OCI-LY7 (cell line): ENCODE measurements at regions of chr6 and their contacts with region 1.

Region 1: DNA sequence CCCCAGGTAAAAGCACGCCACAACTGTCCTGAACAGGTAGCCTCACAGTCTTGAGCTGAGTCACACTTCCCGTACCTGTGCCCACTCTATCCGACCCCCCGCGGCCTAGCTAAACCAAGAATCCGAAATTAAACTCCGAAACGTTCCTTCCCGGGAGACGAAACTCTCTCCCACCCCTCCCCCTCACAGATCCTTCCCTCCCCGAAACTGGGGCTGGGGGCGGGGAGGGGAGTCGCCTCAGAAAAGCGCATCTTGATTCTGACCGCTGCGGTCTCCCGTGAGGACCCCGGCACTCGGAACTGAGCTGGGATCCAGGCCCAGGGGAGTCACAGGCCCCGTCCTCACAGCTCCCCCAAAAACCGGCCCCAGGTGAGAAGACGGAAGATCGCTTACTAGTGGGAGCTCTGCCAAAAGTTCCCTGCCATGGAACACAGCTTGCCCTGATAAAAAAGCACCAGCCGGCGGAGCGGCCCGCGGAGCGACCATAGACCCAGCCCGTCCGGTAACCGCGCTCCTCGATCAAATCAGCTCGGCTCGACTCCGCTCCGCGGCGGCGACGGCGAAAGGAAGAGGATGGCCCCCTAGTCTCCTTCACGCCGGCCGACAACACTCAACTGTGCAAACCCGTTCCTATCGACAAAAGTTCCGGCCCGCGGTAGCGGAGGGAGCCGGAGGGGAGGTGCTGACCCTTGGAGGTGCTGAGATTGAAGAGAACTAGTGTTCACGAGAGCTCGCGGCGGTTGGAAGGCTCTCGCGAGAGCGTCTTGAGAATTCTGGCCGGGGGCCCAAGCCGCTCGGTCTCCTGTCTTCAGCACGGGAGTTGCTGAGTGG is at the start of gene CCNC:
- DNase-seq: peak; percentile 97
- H3K4me3 ChIP-seq: peak within 1 kb of the TSS; percentile 89
- H3K27ac ChIP-seq: peak within 1 kb of the TSS; percentile 73
- H3K4me1 ChIP-seq: peaks cover 12% of the 10 kb centered on the region
- CTCF ChIP-seq: no peak
- total RNA-seq, gene CCNC: 53.4 and 58.4 TPM in 2 replicates

Region 2: DNA sequence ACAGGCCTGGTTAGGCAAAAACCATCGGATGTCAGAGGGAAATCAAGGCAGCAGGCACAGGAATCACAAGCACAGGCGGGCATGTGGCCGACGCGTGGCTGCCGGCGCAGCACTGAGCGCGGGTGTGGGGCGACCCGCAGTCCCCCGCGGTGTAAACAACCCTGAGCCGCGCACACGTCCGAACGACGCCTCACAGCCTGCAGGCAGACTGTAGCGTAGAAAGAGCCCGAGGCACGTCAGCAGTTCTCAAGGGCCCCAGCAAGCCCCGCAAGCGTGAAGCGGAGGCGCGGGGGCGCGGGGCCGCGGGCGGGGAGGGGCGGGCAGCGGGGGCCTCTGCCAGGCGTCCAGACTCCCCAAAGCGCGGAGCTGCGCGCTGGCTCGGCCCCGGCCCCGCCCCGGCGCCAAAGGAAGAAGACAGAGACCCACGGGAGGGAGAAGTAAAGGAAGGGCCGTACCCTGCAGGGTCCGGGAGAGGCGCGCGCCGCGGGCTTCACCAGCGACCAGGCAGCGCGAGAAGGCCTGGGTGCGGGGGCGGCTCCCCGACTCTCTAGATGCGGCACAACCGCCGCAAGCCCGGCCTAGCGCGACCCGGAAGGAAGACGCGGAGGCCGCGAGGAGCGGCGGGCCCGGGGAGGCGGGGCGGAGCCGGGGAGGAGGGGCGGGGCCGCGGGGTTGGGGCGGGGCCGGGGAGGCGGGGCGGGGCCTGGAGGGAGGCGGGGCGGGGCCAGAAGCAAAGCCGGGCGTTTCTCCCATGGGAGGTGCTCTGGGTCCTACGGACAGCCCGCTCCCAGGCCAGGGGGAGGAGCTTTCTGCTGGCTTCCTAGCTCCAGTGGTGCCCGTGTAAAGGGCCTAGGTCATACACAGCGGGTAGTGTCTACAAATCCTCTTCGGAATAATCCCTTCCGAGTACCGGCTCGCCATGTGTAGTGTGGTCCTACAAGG is 620.7 kb before region 1 on chr6 and contains the start of gene FBXL4:
- CTCF ChIA-PET with region 1: no interaction called
- POLR2A ChIA-PET with region 1: no interaction called
- intact Hi-C with region 1: loop called (anchors 5 kb)
- DNase-seq: peak; percentile 83
- H3K4me3 ChIP-seq: peak within 1 kb of the TSS; percentile 83
- H3K27ac ChIP-seq: peak within 1 kb of the TSS; percentile 73
- H3K4me1 ChIP-seq: peaks cover 15% of the 10 kb centered on the region
- CTCF ChIP-seq: no peak
- total RNA-seq, gene FBXL4: 8.0 and 14.5 TPM in 2 replicates

Region 3: GRCh38 chr6:99047447-99047846 is 520.9 kb before region 1 on chr6:
- CTCF ChIA-PET with region 1: no interaction called
- POLR2A ChIA-PET with region 1: no interaction called
- intact Hi-C with region 1: no loop called
- DNase-seq: no peak
- H3K4me3 ChIP-seq: no peak overlapping the region
- H3K27ac ChIP-seq: no peak overlapping the region
- H3K4me1 ChIP-seq: no peaks in the 10 kb centered on the region
- CTCF ChIP-seq: no peak

Region 4: GRCh38 chr6:99330159-99330558 is 238.2 kb before region 1 on chr6:
- CTCF ChIA-PET with region 1: no interaction called
- POLR2A ChIA-PET with region 1: no interaction called
- intact Hi-C with region 1: no loop called
- DNase-seq: peak; percentile 72
- H3K4me3 ChIP-seq: no peak overlapping the region
- H3K27ac ChIP-seq: no peak overlapping the region
- H3K4me1 ChIP-seq: no peaks in the 10 kb centered on the region
- CTCF ChIP-seq: peak; percentile 89

Region 5: DNA sequence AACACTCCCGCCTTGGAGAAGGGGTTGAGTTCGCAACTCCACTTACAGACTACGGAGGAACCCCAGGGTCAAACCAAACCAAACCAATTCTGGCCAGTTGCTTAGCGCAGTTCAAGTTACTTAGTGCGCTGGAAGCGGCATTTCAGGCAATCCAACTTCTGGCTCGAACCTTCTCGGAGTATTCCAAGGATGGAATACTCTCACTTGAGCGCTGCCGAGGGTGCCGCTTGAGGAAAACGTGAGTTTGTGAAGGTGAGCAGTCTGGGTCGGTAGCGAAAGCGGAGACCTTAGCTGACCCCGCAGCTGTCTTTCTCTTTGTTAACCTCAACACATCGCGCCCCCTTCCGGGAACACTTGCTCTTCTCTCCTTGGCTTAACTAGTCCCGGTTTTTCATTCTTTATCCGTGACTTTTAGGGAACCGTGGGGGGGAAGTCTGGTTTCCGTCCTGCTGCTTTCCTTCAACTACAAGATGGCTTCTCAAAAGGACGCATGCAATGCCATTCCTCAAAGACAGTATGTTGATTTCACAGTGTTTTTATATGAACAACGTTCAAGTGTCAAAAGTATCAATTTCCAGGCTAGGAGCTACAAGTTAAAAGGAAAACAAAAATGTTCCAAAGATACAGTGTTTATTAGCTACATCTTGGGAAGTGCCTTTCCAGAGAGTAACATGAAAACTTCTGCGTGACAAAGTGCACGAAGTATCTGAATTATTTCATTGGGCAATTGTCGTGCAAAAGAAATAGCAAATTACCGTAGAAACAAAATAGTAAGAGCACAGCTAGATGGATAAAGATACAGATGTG is 142.5 kb before region 1 on chr6:
- CTCF ChIA-PET with region 1: no interaction called
- POLR2A ChIA-PET with region 1: interaction called, 18 read pairs
- intact Hi-C with region 1: loop called (anchors 1 kb)
- DNase-seq: peak; percentile 83
- H3K4me3 ChIP-seq: peak overlapping the region; percentile 80
- H3K27ac ChIP-seq: peak overlapping the region; percentile 91
- H3K4me1 ChIP-seq: peaks cover 42% of the 10 kb centered on the region
- CTCF ChIP-seq: peak; percentile 73

Region 6: DNA sequence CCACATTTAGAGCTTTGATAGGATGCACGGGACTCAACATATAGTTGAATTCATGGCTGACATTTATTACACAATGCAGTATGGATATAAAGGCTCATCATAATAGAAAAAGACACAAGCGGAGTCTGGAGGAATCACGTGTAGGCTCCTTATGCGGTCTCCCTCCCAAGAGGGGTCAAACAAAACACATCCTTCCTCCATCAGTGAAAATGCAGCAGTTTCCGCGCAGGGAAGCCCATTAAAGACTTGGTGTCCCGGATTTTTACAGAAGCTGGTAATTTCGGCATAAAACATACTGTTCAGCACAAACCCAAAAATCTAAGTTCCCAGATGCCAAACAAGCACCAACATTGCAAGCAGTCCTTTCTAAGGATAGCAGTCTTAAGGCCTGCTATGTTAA is 54.2 kb before region 1 on chr6:
- CTCF ChIA-PET with region 1: no interaction called
- POLR2A ChIA-PET with region 1: interaction called, 7 read pairs
- intact Hi-C with region 1: loop called (anchors 1 kb)
- DNase-seq: no peak
- H3K4me3 ChIP-seq: peak overlapping the region; percentile 82
- H3K27ac ChIP-seq: no peak overlapping the region
- H3K4me1 ChIP-seq: peaks cover 23% of the 10 kb centered on the region
- CTCF ChIP-seq: no peak

Region 7: DNA sequence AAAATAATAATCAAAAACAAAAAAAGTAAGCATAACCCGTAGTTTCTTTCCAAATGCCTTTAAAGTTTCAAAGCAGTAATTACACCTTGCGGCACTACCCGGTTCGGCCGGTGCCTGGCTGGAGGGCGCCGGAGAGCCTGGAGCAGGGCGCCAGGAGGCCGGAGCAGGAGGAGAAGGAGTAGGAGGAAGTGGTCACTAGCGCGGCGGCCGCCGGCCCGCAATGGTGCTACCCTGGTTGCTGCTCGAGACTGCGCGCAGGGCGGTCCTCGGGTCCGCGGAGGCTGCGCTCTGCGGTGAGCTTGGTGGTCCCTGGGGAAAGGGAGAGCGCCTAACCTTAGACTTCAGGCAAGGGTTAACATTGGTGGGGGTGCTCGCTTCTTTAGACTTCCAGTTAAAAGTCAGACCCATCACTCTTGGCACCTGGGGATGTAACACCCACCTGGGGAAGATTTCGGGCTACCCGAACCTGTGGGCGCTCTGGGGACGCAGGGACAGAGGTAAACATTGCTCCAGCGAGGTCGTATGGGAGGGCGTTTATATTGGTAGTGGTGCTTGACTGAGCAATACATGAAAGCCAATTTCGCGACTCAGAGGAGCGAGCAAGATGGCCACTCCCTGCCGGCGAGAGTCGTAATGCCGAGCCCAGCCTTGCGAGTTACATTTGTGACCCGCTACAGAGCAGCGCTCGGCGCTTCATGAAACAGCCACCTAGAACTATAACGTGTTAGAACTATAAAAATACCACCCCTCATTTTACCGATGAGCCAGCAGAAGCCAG is 47.3 kb before region 1 on chr6:
- CTCF ChIA-PET with region 1: interaction called, 3 read pairs
- POLR2A ChIA-PET with region 1: interaction called, 25 read pairs
- intact Hi-C with region 1: loop called (anchors 1 kb)
- DNase-seq: peak; percentile 81
- H3K4me3 ChIP-seq: peak overlapping the region; percentile 82
- H3K27ac ChIP-seq: peak overlapping the region; percentile 60
- H3K4me1 ChIP-seq: peaks cover 19% of the 10 kb centered on the region
- CTCF ChIP-seq: peak; percentile 88

Region 8: GRCh38 chr6:99536491-99536890 is 31.8 kb before region 1 on chr6:
- CTCF ChIA-PET with region 1: no interaction called
- POLR2A ChIA-PET with region 1: interaction called, 10 read pairs
- intact Hi-C with region 1: no loop called
- DNase-seq: no peak
- H3K4me3 ChIP-seq: no peak overlapping the region
- H3K27ac ChIP-seq: no peak overlapping the region
- H3K4me1 ChIP-seq: no peaks in the 10 kb centered on the region
- CTCF ChIP-seq: no peak